Heart left ventricle (tissue), 16 donors: ENCODE measurements at regions of chr11 and their contacts with region 1.

Region 1: GRCh38 chr11:62841361-62842184 is 2.2 kb upstream of the WDR74 start:
- DNase-seq: peak; percentile 85 to 93 (median 88)
- ATAC-seq: peak; percentile 73 to 86 (median 77)
- H3K4me3 ChIP-seq: peak overlapping the region in 11 of 12 donors; percentile 38 to 98 (median 86)
- H3K27ac ChIP-seq: peak overlapping the region; percentile 82 to 99 (median 96)
- H3K4me1 ChIP-seq: peaks cover 5 to 33% (median 17%) of the 10 kb centered on the region in 12 donors
- H3K27me3 ChIP-seq: no peaks in the 10 kb centered on the region
- CTCF ChIP-seq: peak in 1 of 12 donors; percentile 2
- POLR2A ChIP-seq: peak; percentile 50 to 96

Region 2: GRCh38 chr11:62621567-62622470 is 219.8 kb before region 1 on chr11 and contains the start of gene B3GAT3:
- intact Hi-C with region 1: no loop called
- DNase-seq: peak; percentile 96 to 99 (median 99)
- ATAC-seq: peak; percentile 98 to 99 (median 99)
- H3K4me3 ChIP-seq: peak within 1 kb of the TSS; percentile 43 to 94 (median 80)
- H3K27ac ChIP-seq: peak within 1 kb of the TSS; percentile 69 to 96 (median 88)
- H3K4me1 ChIP-seq: peaks cover 0 to 28% (median 14%) of the 10 kb centered on the region in 12 donors
- H3K27me3 ChIP-seq: no peaks in the 10 kb centered on the region
- CTCF ChIP-seq: peak in 2 of 12 donors; percentile 4
- POLR2A ChIP-seq: peak in 1 of 2 donors; percentile 85
- total RNA-seq, gene B3GAT3: 9.2 to 20.5 (median 12.3) TPM

Region 3: DNA sequence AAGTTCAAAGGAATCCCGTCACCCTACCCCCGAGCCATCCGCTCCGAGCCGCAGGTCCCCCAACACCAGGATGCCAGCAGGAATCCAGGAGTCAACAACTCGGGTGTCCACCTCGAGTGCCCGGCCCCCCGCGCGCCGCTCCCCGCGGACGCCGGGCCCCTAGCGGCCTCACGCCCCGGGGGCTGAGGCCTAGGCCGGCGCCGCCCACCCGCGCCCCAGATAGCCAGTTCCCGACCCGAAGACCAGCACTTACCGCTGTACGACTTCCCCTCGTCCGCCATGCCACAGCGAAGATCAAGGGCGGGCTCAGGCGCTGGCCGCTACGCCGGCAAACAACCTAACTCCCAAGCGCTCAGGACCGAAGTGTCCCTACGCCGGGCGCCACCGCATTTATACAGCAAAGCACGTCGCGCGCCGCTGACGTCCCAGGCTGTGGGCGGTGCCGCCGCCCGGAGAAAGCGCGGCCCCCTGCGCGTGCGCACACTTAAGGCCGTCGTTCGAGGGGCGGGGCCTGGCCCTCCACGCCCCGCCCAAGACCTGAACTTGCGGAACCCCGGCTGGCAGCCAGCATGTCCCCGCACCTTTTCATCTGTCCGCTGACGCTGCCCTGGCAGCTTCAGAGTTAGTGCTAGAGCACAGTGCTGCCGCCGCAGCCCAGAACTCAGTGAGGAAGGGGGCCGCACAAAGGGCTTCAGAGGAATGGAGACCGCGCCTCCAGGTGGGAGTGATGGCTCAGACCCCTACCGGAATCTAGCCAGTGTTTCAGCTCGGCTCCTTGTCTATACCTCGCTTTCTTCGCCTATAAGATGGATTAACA is 36.3 kb before region 1 on chr11 and contains the start of gene NXF1:
- intact Hi-C with region 1: loop called in 2 of 10 experiments (anchors 1 to 2 kb)
- DNase-seq: peak; percentile 95 to 98 (median 95)
- ATAC-seq: peak; percentile 91 to 96 (median 94)
- H3K4me3 ChIP-seq: peak within 1 kb of the TSS; percentile 76 to 100 (median 86)
- H3K27ac ChIP-seq: peak within 1 kb of the TSS; percentile 58 to 95 (median 92)
- H3K4me1 ChIP-seq: peaks cover 0 to 39% (median 22%) of the 10 kb centered on the region in 12 donors
- H3K27me3 ChIP-seq: no peaks in the 10 kb centered on the region
- CTCF ChIP-seq: peak in 4 of 12 donors; percentile 17 to 24 (median 20)
- POLR2A ChIP-seq: peak; percentile 99 to 100
- total RNA-seq, gene NXF1: 28.5 to 51.7 (median 34.1) TPM

Region 4: DNA sequence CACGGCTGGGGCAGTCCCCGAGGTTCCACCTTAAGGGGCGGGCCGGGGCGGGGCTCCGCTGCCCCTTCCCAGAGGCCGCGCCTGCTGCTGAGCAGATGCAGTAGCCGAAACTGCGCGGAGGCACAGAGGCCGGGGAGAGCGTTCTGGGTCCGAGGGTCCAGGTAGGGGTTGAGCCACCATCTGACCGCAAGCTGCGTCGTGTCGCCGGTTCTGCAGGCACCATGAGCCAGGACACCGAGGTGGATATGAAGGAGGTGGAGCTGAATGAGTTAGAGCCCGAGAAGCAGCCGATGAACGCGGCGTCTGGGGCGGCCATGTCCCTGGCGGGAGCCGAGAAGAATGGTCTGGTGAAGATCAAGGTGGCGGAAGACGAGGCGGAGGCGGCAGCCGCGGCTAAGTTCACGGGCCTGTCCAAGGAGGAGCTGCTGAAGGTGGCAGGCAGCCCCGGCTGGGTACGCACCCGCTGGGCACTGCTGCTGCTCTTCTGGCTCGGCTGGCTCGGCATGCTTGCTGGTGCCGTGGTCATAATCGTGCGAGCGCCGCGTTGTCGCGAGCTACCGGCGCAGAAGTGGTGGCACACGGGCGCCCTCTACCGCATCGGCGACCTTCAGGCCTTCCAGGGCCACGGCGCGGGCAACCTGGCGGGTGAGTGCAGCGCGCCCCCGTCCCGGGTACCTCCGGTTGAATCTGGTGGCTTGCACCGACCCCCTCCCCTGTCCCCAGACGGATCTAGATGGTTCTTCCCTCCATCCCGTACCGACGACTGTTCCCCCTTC is 39.4 kb after region 1 on chr11 and contains the start of gene SLC3A2:
- intact Hi-C with region 1: loop called in 2 of 10 experiments (anchors 2 kb)
- DNase-seq: peak; percentile 88 to 93 (median 90)
- ATAC-seq: peak; percentile 90 to 94 (median 92)
- H3K4me3 ChIP-seq: peak within 1 kb of the TSS; percentile 80 to 100 (median 96)
- H3K27ac ChIP-seq: peak within 1 kb of the TSS; percentile 93 to 100 (median 99)
- H3K4me1 ChIP-seq: peaks cover 13 to 53% (median 40%) of the 10 kb centered on the region in 12 donors
- H3K27me3 ChIP-seq: no peaks in the 10 kb centered on the region
- CTCF ChIP-seq: peak; percentile 49 to 93 (median 80)
- POLR2A ChIP-seq: peak; percentile 95 to 98
- total RNA-seq, gene SLC3A2: 26.6 to 76.0 (median 59.1) TPM